Heart left ventricle (tissue), 16 donors: ENCODE measurements at regions of chr10 and their contacts with region 1.

Region 1: DNA sequence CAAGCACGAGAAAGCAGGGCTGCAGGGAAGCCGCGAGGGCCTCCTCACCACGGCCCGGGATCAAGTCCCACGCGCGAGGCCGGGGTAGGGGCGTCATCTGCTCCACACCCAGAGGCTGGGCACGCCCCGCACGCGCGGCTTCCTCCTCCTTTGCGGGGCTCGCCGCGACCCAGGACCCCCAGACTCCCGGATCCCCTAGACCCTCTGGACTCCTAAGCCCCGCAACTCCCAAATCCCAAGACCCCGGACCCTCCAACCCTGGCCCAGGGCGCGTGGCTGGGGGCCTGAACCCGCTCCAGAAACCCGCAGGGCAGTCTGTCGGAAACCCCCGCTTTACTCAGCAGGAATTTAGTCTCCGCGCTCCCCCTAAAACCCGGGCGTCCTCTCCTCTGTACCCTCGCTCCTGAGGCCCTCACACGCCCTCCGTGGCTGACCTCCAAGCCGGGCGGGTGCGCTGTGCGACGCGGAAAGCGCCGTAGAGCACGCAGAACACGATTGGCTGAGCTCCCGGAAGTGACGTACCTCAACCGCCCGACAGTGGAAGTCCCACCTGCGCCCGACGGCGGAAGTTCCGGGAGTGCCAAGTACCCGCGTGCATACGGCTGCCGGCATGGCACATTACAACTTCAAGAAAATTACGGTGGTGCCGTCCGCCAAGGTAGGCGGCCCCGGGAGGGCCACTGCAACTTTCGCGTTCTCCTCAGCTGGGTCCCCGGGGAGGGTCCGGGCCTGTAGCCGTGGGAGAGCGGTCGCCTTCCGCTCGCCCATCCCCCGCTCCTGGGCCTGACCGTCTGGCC is at the start of gene GTPBP4:
- DNase-seq: peak; percentile 99 to 100 (median 99)
- ATAC-seq: peak; percentile 98 to 100 (median 98)
- H3K4me3 ChIP-seq: peak within 1 kb of the TSS; percentile 58 to 100 (median 90)
- H3K27ac ChIP-seq: peak within 1 kb of the TSS; percentile 86 to 98 (median 94)
- H3K4me1 ChIP-seq: peaks cover 2 to 32% (median 18%) of the 10 kb centered on the region in 12 donors
- H3K27me3 ChIP-seq: no peaks in the 10 kb centered on the region
- CTCF ChIP-seq: peak in 7 of 12 donors; percentile 7 to 56 (median 27)
- POLR2A ChIP-seq: peak; percentile 66 to 81
- total RNA-seq, gene GTPBP4: 13.5 to 31.8 (median 28.8) TPM

Region 2: DNA sequence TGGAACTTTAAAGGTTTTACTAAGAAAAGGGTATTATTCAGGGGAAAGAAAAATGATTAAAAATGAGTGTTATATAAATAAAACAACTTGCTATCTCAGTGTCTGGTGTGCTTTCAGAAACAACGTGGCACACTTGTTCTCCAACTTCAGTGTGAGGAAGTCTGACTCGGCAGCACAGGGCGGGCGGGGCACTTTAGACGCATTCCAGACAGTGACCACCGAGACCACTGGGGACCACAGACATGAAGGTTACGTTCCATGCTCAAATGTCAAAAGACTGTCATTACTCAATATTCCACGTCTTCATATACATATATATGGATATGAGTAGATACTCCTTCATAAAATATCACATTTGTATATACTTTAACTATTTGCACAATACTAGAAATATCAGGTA is 143.5 kb before region 1 on chr10:
- intact Hi-C with region 1: loop called in 1 of 10 experiments (anchors 10 kb)
- DNase-seq: peak in 1 of 5 donors; percentile 40
- ATAC-seq: peak in 1 of 4 donors; percentile 47
- H3K4me3 ChIP-seq: no peak overlapping the region
- H3K27ac ChIP-seq: no peak overlapping the region
- H3K4me1 ChIP-seq: peaks cover 0 to 33% (median 13%) of the 10 kb centered on the region in 12 donors
- H3K27me3 ChIP-seq: no peaks in the 10 kb centered on the region
- CTCF ChIP-seq: no peak
- POLR2A ChIP-seq: no peak

Region 3: GRCh38 chr10:865257-865656 is 122.8 kb before region 1 on chr10:
- intact Hi-C with region 1: loop called in 2 of 10 experiments (anchors 10 kb)
- DNase-seq: no peak
- ATAC-seq: peak in 1 of 4 donors; percentile 5
- H3K4me3 ChIP-seq: no peak overlapping the region
- H3K27ac ChIP-seq: peak overlapping the region in 1 of 12 donors; percentile 33
- H3K4me1 ChIP-seq: peaks cover 0 to 46% (median 25%) of the 10 kb centered on the region in 12 donors
- H3K27me3 ChIP-seq: no peaks in the 10 kb centered on the region
- CTCF ChIP-seq: no peak
- POLR2A ChIP-seq: no peak

Region 4: DNA sequence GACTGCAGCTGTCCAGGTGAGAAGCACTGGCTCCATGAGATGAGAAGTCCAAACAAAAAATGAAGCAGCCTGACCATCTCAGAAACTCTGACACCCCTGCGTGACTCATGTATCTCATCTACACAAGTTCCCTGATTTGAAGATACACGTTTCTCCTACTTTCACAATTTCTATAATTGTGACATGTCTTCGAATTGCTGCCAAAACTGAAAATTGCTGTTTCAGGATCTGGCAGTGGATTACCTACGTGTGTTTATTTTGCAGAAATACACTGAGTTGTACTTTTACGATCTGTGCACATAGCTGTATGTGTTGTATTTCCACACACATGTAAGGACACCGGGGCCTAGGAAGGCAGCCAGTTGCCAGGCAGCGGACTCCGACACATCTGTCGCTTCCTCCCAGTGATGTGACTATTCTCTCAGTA is 109.7 kb before region 1 on chr10:
- intact Hi-C with region 1: loop called in 1 of 10 experiments (anchors 10 kb)
- DNase-seq: no peak
- ATAC-seq: no peak
- H3K4me3 ChIP-seq: no peak overlapping the region
- H3K27ac ChIP-seq: peak overlapping the region in 2 of 12 donors; percentile 17 to 30
- H3K4me1 ChIP-seq: peaks cover 0 to 31% (median 13%) of the 10 kb centered on the region in 12 donors
- H3K27me3 ChIP-seq: no peaks in the 10 kb centered on the region
- CTCF ChIP-seq: no peak
- POLR2A ChIP-seq: no peak

Region 5: GRCh38 chr10:1010703-1011102 is 22.6 kb after region 1 on chr10:
- intact Hi-C with region 1: no loop called
- DNase-seq: no peak
- ATAC-seq: peak in 1 of 4 donors; percentile 53
- H3K4me3 ChIP-seq: no peak overlapping the region
- H3K27ac ChIP-seq: no peak overlapping the region
- H3K4me1 ChIP-seq: no peaks in the 10 kb centered on the region
- H3K27me3 ChIP-seq: no peaks in the 10 kb centered on the region
- CTCF ChIP-seq: no peak
- POLR2A ChIP-seq: no peak

Region 6: GRCh38 chr10:1048732-1049424 is 60.8 kb after region 1 on chr10 and contains the start of gene IDI1:
- intact Hi-C with region 1: loop called in 4 of 10 experiments (anchors 1 to 5 kb)
- DNase-seq: peak; percentile 98 to 99 (median 99)
- ATAC-seq: peak; percentile 94 to 96 (median 95)
- H3K4me3 ChIP-seq: peak within 1 kb of the TSS; percentile 52 to 95 (median 82)
- H3K27ac ChIP-seq: peak within 1 kb of the TSS; percentile 95 to 100 (median 98)
- H3K4me1 ChIP-seq: peaks cover 6 to 55% (median 32%) of the 10 kb centered on the region in 12 donors
- H3K27me3 ChIP-seq: no peaks in the 10 kb centered on the region
- CTCF ChIP-seq: peak in 1 of 12 donors; percentile 13
- POLR2A ChIP-seq: peak; percentile 96 to 99
- total RNA-seq, gene IDI1: 13.7 to 29.8 (median 18.4) TPM

Region 7: DNA sequence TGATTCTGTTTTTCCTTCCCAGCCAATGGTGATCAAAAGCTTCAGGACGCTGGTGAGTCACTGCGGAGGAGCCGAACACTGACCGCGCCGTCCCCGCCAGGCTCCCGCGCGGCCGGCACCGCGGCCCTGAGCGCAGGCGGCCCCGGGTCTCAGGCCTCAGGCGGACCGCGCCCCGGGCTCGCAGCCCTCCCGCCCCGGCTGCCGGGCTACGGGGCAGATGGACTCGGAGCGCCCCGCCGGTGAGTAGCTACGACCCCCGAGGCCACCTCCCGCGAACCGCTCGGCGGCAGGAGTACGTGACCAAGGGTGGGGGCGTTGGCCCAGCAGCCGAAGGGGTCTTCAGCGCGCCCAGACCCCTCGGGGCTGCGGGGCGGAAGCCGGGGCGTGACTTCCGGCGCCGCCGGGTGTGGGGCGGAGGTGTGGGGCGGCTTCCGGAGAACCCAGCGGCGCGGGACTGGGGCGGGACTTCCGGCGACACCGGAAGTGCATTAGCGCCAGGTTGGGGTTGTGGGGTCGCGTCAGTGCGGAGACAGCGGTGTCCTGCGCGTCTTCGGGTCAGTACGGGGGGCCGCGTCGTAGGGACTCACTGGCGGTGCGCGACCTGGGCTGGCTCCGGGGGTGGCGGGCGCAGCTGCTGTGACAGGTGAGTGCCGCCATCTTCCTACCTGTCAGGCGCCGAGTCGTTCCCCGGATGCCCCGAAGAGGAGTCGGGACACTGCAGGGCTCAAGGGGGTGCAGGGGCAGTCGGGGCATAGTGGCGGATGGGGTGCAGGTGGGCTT is 68.4 kb after region 1 on chr10 and contains the start of gene WDR37:
- intact Hi-C with region 1: loop called in 2 of 10 experiments (anchors 5 kb)
- DNase-seq: peak; percentile 89 to 94 (median 92)
- ATAC-seq: peak; percentile 91 to 97 (median 96)
- H3K4me3 ChIP-seq: peak within 1 kb of the TSS; percentile 68 to 99 (median 92)
- H3K27ac ChIP-seq: peak within 1 kb of the TSS; percentile 96 to 100 (median 98)
- H3K4me1 ChIP-seq: peaks cover 0 to 68% (median 40%) of the 10 kb centered on the region in 12 donors
- H3K27me3 ChIP-seq: no peaks in the 10 kb centered on the region
- CTCF ChIP-seq: no peak
- POLR2A ChIP-seq: peak; percentile 46 to 70
- total RNA-seq, gene WDR37: 22.6 to 43.3 (median 30.7) TPM